Activated CD8-positive, alpha-beta T cell treated with anti-CD3 and anti-CD28 coated beads, Interleukin-2, amount 10 ng/mL, durations not matched to agents 7 days and 5 days (primary cell): ENCODE measurements at regions of chr15 and their contacts with region 1.

Region 1: DNA sequence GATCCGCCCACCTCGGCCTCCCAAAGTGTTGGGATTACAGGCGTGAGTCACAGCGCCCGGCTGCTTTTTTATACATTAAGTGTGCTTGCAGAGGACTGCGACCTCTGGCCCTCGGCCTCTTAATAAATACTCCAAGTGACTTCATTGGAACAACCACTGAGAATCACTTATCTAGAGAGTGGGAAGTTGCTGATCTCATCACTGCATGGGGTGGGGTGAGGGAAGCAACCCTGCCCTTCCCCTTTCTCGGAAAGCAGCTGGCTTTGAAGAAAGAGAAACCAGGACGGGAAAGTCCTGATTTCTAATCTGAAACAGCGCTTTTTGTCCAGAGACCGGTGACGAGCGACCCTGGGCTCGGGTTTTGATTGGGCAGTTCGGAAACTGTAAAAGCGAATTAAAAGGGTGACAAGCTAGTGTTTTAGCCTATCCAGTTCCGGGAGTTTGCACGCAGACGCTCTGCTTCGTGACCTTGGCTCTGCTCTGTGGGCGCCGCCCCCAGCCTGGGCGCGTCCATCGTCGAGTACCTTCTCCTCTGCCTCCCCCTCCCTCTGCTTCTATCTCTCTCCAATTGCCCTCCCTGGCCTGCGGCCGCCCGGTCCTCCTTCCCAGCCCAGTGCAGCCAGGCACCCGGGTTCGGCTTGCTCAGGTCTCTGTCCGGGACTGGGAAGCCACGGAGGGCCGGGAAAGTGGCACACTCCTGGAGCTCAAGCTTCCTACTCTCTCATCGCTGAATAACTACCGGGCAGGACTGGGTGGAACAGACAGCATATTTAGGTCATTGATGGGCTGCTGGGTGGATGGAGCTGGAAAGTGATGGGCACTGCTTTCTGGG is 7.5 kb upstream of the TRIM69 start:
- DNase-seq: peak; percentile 98
- ATAC-seq: peak; percentile 82
- H3K4me3 Mint-ChIP-seq: peak overlapping the region; percentile 99
- H3K27ac Mint-ChIP-seq: peak overlapping the region; percentile 100
- H3K4me1 Mint-ChIP-seq: peaks cover 72% of the 10 kb centered on the region
- H3K27me3 Mint-ChIP-seq: no peaks in the 10 kb centered on the region

Region 2: GRCh38 chr15:44519537-44519936 is 209.3 kb before region 1 on chr15:
- CTCF ChIA-PET with region 1: no interaction called
- POLR2A ChIA-PET with region 1: no interaction called
- DNase-seq: no peak
- ATAC-seq: no peak
- H3K4me3 Mint-ChIP-seq: no peak overlapping the region
- H3K27ac Mint-ChIP-seq: no peak overlapping the region
- H3K4me1 Mint-ChIP-seq: no peaks in the 10 kb centered on the region
- H3K27me3 Mint-ChIP-seq: no peaks in the 10 kb centered on the region

Region 3: GRCh38 chr15:44676676-44677075 is 52.1 kb before region 1 on chr15:
- CTCF ChIA-PET with region 1: interaction called, 6 read pairs
- POLR2A ChIA-PET with region 1: interaction called, 35 read pairs
- DNase-seq: peak; percentile 61
- ATAC-seq: peak; percentile 48
- H3K4me3 Mint-ChIP-seq: peak overlapping the region; percentile 70
- H3K27ac Mint-ChIP-seq: peak overlapping the region; percentile 95
- H3K4me1 Mint-ChIP-seq: peaks cover 82% of the 10 kb centered on the region
- H3K27me3 Mint-ChIP-seq: no peaks in the 10 kb centered on the region

Region 4: GRCh38 chr15:44682211-44682610 is 46.6 kb before region 1 on chr15:
- CTCF ChIA-PET with region 1: interaction called, 6 read pairs
- POLR2A ChIA-PET with region 1: interaction called, 35 read pairs
- DNase-seq: no peak
- ATAC-seq: no peak
- H3K4me3 Mint-ChIP-seq: peak overlapping the region; percentile 66
- H3K27ac Mint-ChIP-seq: peak overlapping the region; percentile 88
- H3K4me1 Mint-ChIP-seq: peaks cover 89% of the 10 kb centered on the region
- H3K27me3 Mint-ChIP-seq: no peaks in the 10 kb centered on the region

Region 5: GRCh38 chr15:44753345-44753744 is 24.6 kb after region 1 on chr15:
- CTCF ChIA-PET with region 1: no interaction called
- POLR2A ChIA-PET with region 1: no interaction called
- DNase-seq: no peak
- ATAC-seq: no peak
- H3K4me3 Mint-ChIP-seq: no peak overlapping the region
- H3K27ac Mint-ChIP-seq: no peak overlapping the region
- H3K4me1 Mint-ChIP-seq: peaks cover 6% of the 10 kb centered on the region
- H3K27me3 Mint-ChIP-seq: no peaks in the 10 kb centered on the region

Region 6: GRCh38 chr15:44769521-44769920 is 40.7 kb after region 1 on chr15:
- CTCF ChIA-PET with region 1: no interaction called
- POLR2A ChIA-PET with region 1: no interaction called
- DNase-seq: no peak
- ATAC-seq: no peak
- H3K4me3 Mint-ChIP-seq: no peak overlapping the region
- H3K27ac Mint-ChIP-seq: no peak overlapping the region
- H3K4me1 Mint-ChIP-seq: peaks cover 5% of the 10 kb centered on the region
- H3K27me3 Mint-ChIP-seq: no peaks in the 10 kb centered on the region

Region 7: GRCh38 chr15:44861439-44861910 is 132.7 kb after region 1 on chr15:
- CTCF ChIA-PET with region 1: no interaction called
- POLR2A ChIA-PET with region 1: no interaction called
- DNase-seq: no peak
- ATAC-seq: no peak
- H3K4me3 Mint-ChIP-seq: no peak overlapping the region
- H3K27ac Mint-ChIP-seq: no peak overlapping the region
- H3K4me1 Mint-ChIP-seq: no peaks in the 10 kb centered on the region
- H3K27me3 Mint-ChIP-seq: peaks cover 3% of the 10 kb centered on the region